ENCODE measurements at regions of chr10 and their contacts with region 1.

Region 1: DNA sequence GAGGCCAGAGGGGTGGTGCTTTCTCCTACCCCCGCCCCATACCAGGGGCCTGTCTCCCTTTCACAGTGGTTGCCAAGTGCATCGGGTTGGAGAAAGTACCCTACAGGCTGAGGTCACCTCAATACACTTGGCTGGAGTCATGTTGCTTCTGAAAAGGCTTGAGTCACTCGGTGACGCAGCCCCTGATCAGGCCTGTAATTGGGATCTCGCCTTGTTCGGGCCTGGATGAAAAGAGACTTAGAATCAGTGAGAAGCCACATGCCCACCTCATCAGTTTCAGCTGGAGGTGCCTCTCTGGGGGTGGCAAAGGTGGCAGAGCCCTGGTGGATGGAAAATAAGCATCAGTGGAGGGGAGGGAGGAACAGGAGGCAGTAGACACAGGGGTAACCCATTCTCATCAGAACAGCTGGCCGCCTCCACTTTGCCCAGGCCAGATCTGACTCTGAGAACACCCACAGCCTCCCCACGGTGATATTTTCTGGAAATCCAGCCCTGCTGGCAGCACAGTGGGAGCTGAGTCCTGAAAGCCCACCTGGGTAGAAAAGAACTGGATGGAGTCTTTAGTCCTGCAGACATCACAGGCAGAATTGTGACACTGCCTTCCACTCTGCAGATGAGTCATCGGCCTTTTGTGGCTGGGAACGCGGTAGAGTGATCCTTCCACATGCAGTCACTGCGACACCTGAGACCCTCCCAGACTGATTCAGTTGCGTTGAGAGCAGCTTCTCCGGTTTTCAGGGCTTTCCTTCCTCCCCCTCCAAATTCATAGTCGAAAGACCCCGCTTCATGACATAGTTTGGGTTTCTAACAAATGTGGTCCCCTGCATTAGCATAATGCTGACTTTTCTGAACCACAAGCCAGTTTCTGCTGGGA is 108.0 kb downstream of the GRK5 start:
- DNase-seq: peak; percentile 63
- H3K4me3 Mint-ChIP-seq: peak overlapping the region; percentile 51
- H3K27ac Mint-ChIP-seq: peak overlapping the region; percentile 95
- H3K4me1 Mint-ChIP-seq: peaks cover 51% of the 10 kb centered on the region
- H3K27me3 Mint-ChIP-seq: peaks cover 6% of the 10 kb centered on the region

Region 2: DNA sequence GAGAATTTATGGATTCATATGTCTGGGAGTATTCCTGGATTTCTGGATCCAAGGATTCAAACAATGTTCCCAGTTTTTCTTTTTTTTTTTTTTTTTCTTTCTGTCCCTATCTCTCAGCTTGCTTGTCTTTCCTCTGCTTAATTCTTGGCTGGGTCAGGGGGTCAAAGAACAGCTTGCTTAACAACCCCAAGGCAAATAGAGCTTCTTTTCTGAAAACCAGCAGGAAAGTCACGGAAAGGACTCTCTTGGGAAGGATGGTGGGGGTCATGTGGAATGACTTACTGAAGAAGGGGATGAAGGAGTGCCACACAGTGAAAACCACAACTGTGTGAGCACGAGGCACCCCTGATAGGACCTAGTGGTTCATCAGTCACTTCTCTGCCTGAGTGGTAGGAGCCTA is 71.9 kb before region 1 on chr10:
- intact Hi-C with region 1: no loop called
- DNase-seq: no peak
- H3K4me3 Mint-ChIP-seq: no peak overlapping the region
- H3K27ac Mint-ChIP-seq: peak overlapping the region; percentile 38
- H3K4me1 Mint-ChIP-seq: peaks cover 24% of the 10 kb centered on the region
- H3K27me3 Mint-ChIP-seq: no peaks in the 10 kb centered on the region

Region 3: GRCh38 chr10:119253433-119254174 is 61.8 kb before region 1 on chr10:
- intact Hi-C with region 1: loop called (anchors 2 kb)
- DNase-seq: no peak
- H3K4me3 Mint-ChIP-seq: no peak overlapping the region
- H3K27ac Mint-ChIP-seq: peak overlapping the region; percentile 89
- H3K4me1 Mint-ChIP-seq: peaks cover 33% of the 10 kb centered on the region
- H3K27me3 Mint-ChIP-seq: no peaks in the 10 kb centered on the region

Region 4: GRCh38 chr10:119268871-119269506 is 46.4 kb before region 1 on chr10:
- intact Hi-C with region 1: loop called (anchors 2 kb)
- DNase-seq: peak; percentile 77
- H3K4me3 Mint-ChIP-seq: peak overlapping the region; percentile 53
- H3K27ac Mint-ChIP-seq: peak overlapping the region; percentile 99
- H3K4me1 Mint-ChIP-seq: peaks cover 47% of the 10 kb centered on the region
- H3K27me3 Mint-ChIP-seq: no peaks in the 10 kb centered on the region

Region 5: GRCh38 chr10:119333146-119333792 is 17.9 kb after region 1 on chr10:
- intact Hi-C with region 1: loop called (anchors 1 kb)
- DNase-seq: no peak
- H3K4me3 Mint-ChIP-seq: no peak overlapping the region
- H3K27ac Mint-ChIP-seq: no peak overlapping the region
- H3K4me1 Mint-ChIP-seq: peaks cover 15% of the 10 kb centered on the region
- H3K27me3 Mint-ChIP-seq: no peaks in the 10 kb centered on the region

Region 6: DNA sequence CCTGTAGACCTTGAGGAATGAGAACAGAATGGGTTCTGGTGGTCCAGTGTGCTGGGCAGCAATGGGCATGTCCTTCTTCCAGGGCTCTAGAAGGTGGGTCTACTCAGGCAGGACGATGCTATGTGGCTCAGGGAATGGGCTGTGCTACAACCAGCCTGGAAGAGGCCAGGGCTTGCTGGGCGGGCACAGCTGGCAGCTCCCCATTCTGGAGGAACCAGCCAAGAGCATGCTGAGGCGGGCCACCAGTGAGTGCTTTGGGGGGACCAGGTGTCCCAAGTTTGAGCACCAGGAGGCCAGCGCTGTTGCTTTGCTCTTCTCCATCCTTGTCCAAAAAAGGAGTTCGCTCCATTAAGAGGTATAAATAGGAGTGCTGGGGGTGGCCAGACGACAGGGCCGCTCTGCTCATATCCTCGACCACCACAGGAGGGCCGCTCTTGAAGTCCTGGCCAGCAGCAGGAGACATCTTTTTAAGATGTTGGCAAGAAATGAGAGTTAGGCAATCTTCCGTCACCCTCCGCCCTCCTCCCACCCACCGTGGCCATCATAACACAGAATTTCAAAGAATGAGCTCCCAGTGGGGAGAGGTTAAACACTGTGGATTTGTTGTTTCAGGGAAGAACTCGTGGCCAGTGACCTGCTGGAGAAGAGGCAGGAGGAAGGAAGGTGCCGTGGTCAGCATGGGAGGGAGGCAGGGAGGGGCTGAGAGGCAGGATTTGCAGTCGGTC is 33.3 kb after region 1 on chr10:
- intact Hi-C with region 1: no loop called
- DNase-seq: no peak
- H3K4me3 Mint-ChIP-seq: no peak overlapping the region
- H3K27ac Mint-ChIP-seq: no peak overlapping the region
- H3K4me1 Mint-ChIP-seq: peaks cover 7% of the 10 kb centered on the region
- H3K27me3 Mint-ChIP-seq: no peaks in the 10 kb centered on the region

Region 7: GRCh38 chr10:119542988-119543813 is 227.8 kb after region 1 on chr10:
- intact Hi-C with region 1: loop called (anchors 1 kb)
- DNase-seq: peak; percentile 52
- H3K4me3 Mint-ChIP-seq: peak overlapping the region; percentile 88
- H3K27ac Mint-ChIP-seq: peak overlapping the region; percentile 86
- H3K4me1 Mint-ChIP-seq: peaks cover 39% of the 10 kb centered on the region
- H3K27me3 Mint-ChIP-seq: peaks cover 18% of the 10 kb centered on the region